ENCODE measurements at regions of chr15 and their contacts with region 1.

Region 1: DNA sequence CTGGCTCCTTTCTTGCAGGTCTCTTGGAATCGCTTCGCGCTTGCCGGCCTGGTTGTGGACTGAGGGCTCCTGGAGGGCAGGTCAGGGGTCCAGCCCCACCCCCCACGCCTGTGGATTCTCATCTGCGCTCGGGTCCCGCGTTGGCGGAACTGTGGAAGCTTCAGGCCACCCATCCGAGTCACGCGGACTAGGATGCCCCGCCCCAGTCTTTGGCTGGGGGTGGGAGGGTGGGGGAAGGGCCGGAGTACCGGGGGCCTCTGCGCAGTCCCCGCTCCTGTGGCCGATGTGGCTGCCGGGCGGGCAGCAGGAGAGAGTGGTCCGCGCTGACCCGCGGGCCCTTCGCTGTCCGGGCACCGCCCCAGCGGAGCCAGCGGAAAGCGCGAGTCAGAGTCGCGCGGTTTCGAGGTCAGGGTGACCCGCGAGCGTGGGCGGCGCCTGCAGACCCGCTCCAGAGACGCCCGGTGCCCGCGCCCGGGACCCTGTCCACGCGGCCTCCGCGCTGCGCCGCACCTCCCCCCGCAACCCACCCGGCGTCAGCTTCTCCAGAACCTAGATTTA is 114.2 kb downstream of the KLF13 start:
- DNase-seq: no peak
- ATAC-seq: no peak
- H3K4me3 ChIP-seq: no peak overlapping the region; a peak in 1 of 6 replicates
- H3K27ac ChIP-seq: no peak overlapping the region
- H3K4me1 ChIP-seq: peaks cover under 1% of the 10 kb centered on the region
- H3K27me3 ChIP-seq: peaks cover 0 to 7% of the 10 kb centered on the region in 2 experiments; a peak in 2 of 5 replicates
- CTCF ChIP-seq: no peak
- EP300 ChIP-seq: no peak
- POLR2A ChIP-seq: no peak
- RAD21 ChIP-seq: no peak

Region 2: GRCh38 chr15:31488426-31489204 is 47.8 kb after region 1 on chr15:
- CTCF ChIA-PET with region 1: interaction called, 18 read pairs
- POLR2A ChIA-PET with region 1: no interaction called
- in situ Hi-C with region 1: loop called (anchors 5 kb)
- intact Hi-C with region 1: loop called (anchors 1 kb)
- DNase-seq: peak; percentile 64
- ATAC-seq: peak; percentile 86
- H3K4me3 ChIP-seq: no peak overlapping the region
- H3K27ac ChIP-seq: no peak overlapping the region
- H3K4me1 ChIP-seq: no peaks in the 10 kb centered on the region
- H3K27me3 ChIP-seq: no peaks in the 10 kb centered on the region; a peak in 2 of 5 replicates
- CTCF ChIP-seq: peak; percentile 70
- EP300 ChIP-seq: no peak
- POLR2A ChIP-seq: no peak
- RAD21 ChIP-seq: peak; percentile 52; the same call in 1 of the 2 replicates

Region 3: GRCh38 chr15:31563421-31563820 is 122.6 kb after region 1 on chr15:
- CTCF ChIA-PET with region 1: no interaction called
- POLR2A ChIA-PET with region 1: no interaction called
- in situ Hi-C with region 1: no loop called
- intact Hi-C with region 1: no loop called
- DNase-seq: no peak
- ATAC-seq: no peak
- H3K4me3 ChIP-seq: no peak overlapping the region
- H3K27ac ChIP-seq: no peak overlapping the region
- H3K4me1 ChIP-seq: no peaks in the 10 kb centered on the region
- H3K27me3 ChIP-seq: peaks cover 0 to 3% of the 10 kb centered on the region in 2 experiments; a peak in 2 of 5 replicates
- CTCF ChIP-seq: no peak
- EP300 ChIP-seq: no peak
- POLR2A ChIP-seq: no peak
- RAD21 ChIP-seq: no peak

Region 4: GRCh38 chr15:31609906-31610305 is 169.1 kb after region 1 on chr15:
- CTCF ChIA-PET with region 1: no interaction called
- POLR2A ChIA-PET with region 1: no interaction called
- in situ Hi-C with region 1: no loop called
- intact Hi-C with region 1: no loop called
- DNase-seq: no peak
- ATAC-seq: no peak
- H3K4me3 ChIP-seq: no peak overlapping the region
- H3K27ac ChIP-seq: no peak overlapping the region
- H3K4me1 ChIP-seq: no peaks in the 10 kb centered on the region
- H3K27me3 ChIP-seq: no peaks in the 10 kb centered on the region
- CTCF ChIP-seq: no peak
- EP300 ChIP-seq: no peak
- POLR2A ChIP-seq: no peak
- RAD21 ChIP-seq: no peak

Measured in HepG2 (cell line).